K562 (cell line): ENCODE measurements at regions of chr6 and their contacts with region 1.

Region 1: DNA sequence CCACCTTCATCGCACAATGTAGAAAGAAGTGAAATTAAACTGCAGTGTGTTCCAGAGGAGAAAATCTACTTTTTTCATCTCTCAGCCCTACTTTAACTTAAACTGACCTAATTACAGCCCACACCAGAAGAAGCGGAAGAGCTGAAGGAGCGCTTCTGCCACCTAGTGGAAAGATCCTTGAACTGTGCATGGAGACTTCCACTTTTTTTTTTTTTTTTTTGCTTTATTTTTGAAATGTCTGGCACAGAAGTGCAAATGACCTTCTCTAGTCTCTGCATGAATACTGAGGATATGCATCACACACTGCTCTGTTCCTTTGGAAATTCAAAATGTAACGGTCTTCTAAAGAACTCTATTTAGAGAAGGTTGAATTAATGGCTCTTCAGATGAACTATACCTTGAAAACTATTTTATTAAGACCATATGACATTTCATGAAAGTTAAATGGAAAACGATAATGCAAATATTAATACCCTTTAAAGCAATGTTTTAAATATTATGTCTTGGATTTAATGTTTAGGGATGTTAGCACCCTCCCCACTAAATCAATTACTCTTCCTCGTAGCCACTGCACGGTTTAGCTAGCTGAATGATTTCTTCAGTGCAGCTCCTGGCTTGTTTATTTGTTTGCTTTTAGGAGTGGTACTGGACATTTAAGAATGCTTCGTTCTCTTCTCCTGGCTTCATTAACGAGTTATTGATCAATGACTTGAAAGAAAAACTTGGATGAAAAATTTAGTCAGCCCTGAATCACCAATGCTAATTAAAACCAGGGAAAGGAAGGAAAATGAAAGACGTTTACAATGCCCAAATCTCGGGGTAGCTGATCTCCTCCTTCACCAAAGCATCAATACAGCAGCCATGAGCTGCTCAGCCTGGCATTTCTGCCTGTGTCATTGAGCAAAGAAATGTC is 569.6 kb upstream of the GJE1 start:
- DNase-seq: peak; percentile 62 to 83 (median 64)
- ATAC-seq: peak; percentile 97
- H3K4me3 ChIP-seq: no peak overlapping the region
- H3K27ac ChIP-seq: no peak overlapping the region
- H3K4me1 ChIP-seq: 0 out of 5 replicates have a peak, but pooled peaks cover 0 to 4% of the 10 kb centered on the region in 2 experiments
- H3K27me3 ChIP-seq: no peaks in the 10 kb centered on the region
- CTCF ChIP-seq: peak; percentile 73 to 85 (median 76)
- EP300 ChIP-seq: no peak
- POLR2A ChIP-seq: no peak
- RAD21 ChIP-seq: peak; percentile 71 to 76

Region 2: DNA sequence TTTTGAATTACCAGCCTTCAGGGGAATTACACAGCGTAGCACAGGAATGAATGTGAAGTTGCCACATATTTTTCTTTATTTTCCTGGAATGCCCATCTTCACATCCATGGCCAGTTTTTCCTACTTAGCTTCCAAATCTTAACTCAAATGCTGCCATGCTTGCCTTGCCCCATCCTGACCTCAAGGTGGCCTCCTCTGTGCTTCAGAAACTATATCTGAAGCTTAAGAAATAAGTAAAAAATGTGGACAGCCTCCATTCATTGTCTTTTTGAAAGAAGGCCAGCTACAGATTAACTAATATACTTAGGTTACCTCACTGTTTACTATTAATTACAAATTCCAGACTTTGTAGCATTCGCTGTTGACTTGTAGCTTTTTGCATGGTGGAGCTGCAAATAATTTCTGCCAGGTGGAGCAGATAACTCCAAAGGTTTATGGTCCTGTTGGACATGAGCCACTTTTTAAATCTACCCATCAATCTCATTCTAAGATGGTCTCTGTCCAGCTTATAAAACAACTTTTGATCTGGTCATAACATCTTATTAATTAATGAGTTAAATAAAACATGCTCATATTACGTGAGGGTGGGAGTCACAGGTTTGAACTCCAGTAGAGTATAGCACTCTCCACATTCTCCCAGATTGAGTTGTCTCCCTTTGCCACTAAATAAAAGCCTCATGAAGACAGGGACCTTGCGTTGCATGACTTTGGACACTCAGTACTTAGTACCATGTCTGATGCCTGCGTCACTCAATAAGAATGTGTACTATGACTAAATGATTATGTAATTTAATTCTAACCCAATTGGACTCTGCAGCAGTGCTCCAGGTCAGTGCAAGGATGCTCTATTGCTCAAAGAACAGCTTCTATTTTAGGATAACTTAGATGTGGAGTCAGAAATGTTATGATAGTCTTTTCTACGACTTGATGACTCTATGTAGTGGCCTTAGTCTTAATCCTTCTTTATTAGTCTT is 1510.1 kb before region 1 on chr6:
- CTCF ChIA-PET with region 1: no interaction called
- POLR2A ChIA-PET with region 1: no interaction called
- in situ Hi-C with region 1: no loop called
- intact Hi-C with region 1: loop called (anchors 10 kb)
- DNase-seq: peak; percentile 10 to 38 (median 22)
- ATAC-seq: peak; percentile 76
- H3K4me3 ChIP-seq: no peak overlapping the region
- H3K27ac ChIP-seq: no peak overlapping the region
- H3K4me1 ChIP-seq: no peaks in the 10 kb centered on the region
- H3K27me3 ChIP-seq: peaks cover 5 to 7% of the 10 kb centered on the region in 2 experiments; a peak in 2 of 5 replicates
- CTCF ChIP-seq: peak; percentile 45 to 59 (median 57); a peak in 5 of 6 replicates
- EP300 ChIP-seq: no peak
- POLR2A ChIP-seq: no peak
- RAD21 ChIP-seq: peak in 1 of 2 experiments; percentile 72; a peak in 3 of 4 replicates

Region 3: GRCh38 chr6:140921366-140922226 is 641.5 kb before region 1 on chr6:
- CTCF ChIA-PET with region 1: no interaction called
- POLR2A ChIA-PET with region 1: no interaction called
- in situ Hi-C with region 1: no loop called
- intact Hi-C with region 1: loop called (anchors 10 kb)
- DNase-seq: peak; percentile 10 to 33 (median 18)
- ATAC-seq: peak; percentile 87
- H3K4me3 ChIP-seq: no peak overlapping the region
- H3K27ac ChIP-seq: no peak overlapping the region
- H3K4me1 ChIP-seq: no peaks in the 10 kb centered on the region
- H3K27me3 ChIP-seq: no peaks in the 10 kb centered on the region
- CTCF ChIP-seq: peak; percentile 17 to 70 (median 56); a peak in 5 of 6 replicates
- EP300 ChIP-seq: no peak
- POLR2A ChIP-seq: no peak
- RAD21 ChIP-seq: peak; percentile 78 to 95

Region 4: GRCh38 chr6:142112451-142113061 is 549.4 kb after region 1 on chr6:
- CTCF ChIA-PET with region 1: no interaction called
- POLR2A ChIA-PET with region 1: no interaction called
- in situ Hi-C with region 1: no loop called
- intact Hi-C with region 1: loop called (anchors 2 kb)
- DNase-seq: peak; percentile 23 to 82 (median 49)
- ATAC-seq: peak; percentile 65
- H3K4me3 ChIP-seq: no peak overlapping the region
- H3K27ac ChIP-seq: no peak overlapping the region
- H3K4me1 ChIP-seq: no peaks in the 10 kb centered on the region
- H3K27me3 ChIP-seq: no peaks in the 10 kb centered on the region
- CTCF ChIP-seq: peak; percentile 56 to 85 (median 78); a peak in 5 of 6 replicates
- EP300 ChIP-seq: no peak
- POLR2A ChIP-seq: no peak
- RAD21 ChIP-seq: peak; percentile 85 to 92